ENCODE measurements at regions of chr3 and their contacts with region 1.

Region 1: GRCh38 chr3:46508850-46509591 is 11.2 kb downstream of the RTP3 start:
- DNase-seq: peak; percentile 48 to 94 (median 67)
- ATAC-seq: peak; percentile 83
- H3K4me3 ChIP-seq: no peak overlapping the region
- H3K27ac ChIP-seq: peak overlapping the region; percentile 80
- H3K4me1 ChIP-seq: peaks cover 30 to 71% of the 10 kb centered on the region in 2 experiments
- H3K27me3 ChIP-seq: no peaks in the 10 kb centered on the region
- CTCF ChIP-seq: no peak
- EP300 ChIP-seq: peak; percentile 100
- POLR2A ChIP-seq: no peak
- RAD21 ChIP-seq: 0 out of 4 replicates have a peak, but pooled peaks of 1 of the 2 experiments have one; percentile 9

Region 2: DNA sequence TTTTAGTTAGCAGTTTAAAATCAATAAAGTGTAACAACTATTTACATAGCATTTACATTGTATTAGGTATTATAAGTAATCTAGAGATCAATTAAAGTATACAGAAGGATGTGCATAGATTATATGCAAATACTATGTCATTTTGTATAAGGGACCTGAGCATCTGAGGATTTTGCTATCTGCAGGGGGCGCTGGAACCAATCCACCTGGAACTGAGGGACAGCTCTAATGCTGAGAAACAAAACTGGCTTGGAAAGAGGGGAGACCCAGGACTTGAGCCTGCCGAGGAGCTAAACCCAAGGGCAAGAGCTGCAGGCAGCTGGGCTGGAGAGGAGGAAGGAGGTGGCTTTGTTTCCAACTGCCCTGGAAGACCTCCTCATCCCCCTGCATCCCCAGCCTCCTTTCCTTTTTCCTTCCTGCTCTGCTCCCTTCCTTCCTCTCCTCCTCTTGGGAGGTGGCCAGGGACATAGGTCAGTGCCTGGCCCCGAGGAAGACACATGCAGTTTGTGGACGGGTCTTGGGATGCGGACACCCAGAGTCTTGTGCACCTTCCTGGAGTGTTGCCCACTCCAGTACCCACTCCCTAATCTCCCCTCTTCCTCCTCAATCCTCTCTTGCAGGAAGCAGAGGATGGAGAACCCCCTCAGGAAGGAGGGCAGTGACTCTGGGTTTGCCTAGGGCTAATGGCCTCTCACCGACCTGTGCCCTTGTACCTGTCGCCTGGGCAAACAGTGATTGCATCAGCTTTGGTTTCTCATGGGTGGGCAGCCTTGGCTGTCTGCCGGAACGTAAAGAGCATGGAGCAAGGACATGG is 12.1 kb before region 1 on chr3:
- CTCF ChIA-PET with region 1: no interaction called
- POLR2A ChIA-PET with region 1: interaction called, 23 read pairs
- in situ Hi-C with region 1: no loop called
- intact Hi-C with region 1: no loop called
- DNase-seq: peak in 2 of 4 experiments; percentile 62 to 76
- ATAC-seq: peak; percentile 78
- H3K4me3 ChIP-seq: no peak overlapping the region
- H3K27ac ChIP-seq: no peak overlapping the region
- H3K4me1 ChIP-seq: peaks cover 38 to 64% of the 10 kb centered on the region in 2 experiments; a peak in 4 of 5 replicates
- H3K27me3 ChIP-seq: no peaks in the 10 kb centered on the region
- CTCF ChIP-seq: peak; percentile 75 to 88 (median 85)
- EP300 ChIP-seq: no peak
- POLR2A ChIP-seq: no peak
- RAD21 ChIP-seq: peak; percentile 73 to 86

Region 3: GRCh38 chr3:46520531-46520930 is 11.5 kb after region 1 on chr3:
- CTCF ChIA-PET with region 1: no interaction called
- POLR2A ChIA-PET with region 1: interaction called, 10 read pairs
- in situ Hi-C with region 1: no loop called
- intact Hi-C with region 1: no loop called
- DNase-seq: no peak
- ATAC-seq: no peak
- H3K4me3 ChIP-seq: no peak overlapping the region
- H3K27ac ChIP-seq: no peak overlapping the region
- H3K4me1 ChIP-seq: peaks cover 8 to 16% of the 10 kb centered on the region in 2 experiments; a peak in 3 of 5 replicates
- H3K27me3 ChIP-seq: no peaks in the 10 kb centered on the region
- CTCF ChIP-seq: no peak
- EP300 ChIP-seq: no peak
- POLR2A ChIP-seq: no peak
- RAD21 ChIP-seq: no peak

Region 4: DNA sequence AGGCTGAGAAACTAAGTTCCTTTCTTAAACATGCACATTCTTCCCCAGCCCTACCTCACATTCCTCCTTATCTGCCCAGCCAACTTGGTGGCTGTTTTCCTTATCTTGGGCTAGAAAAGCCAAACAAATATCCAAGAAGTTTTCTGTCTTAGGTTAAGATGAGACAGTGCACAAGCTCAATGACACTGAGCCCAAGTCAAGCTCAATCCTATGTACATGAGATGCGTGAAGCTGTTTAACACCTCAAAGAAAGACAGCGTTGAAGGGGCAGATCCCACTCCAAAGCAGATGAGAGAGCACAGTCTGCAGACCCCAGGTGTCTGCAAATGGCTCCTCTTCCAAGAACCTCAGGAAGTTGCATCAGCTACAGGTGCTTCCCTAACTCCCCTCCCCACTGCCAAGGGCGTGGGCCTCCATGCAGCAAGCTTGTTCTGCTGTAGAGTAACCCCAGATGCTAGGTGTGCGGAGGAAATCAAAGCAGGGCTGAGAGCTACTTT is 40.4 kb after region 1 on chr3:
- CTCF ChIA-PET with region 1: no interaction called
- POLR2A ChIA-PET with region 1: interaction called, 4 read pairs
- in situ Hi-C with region 1: no loop called
- intact Hi-C with region 1: loop called (anchors 2 kb)
- DNase-seq: peak; percentile 57 to 89 (median 70)
- ATAC-seq: peak; percentile 89
- H3K4me3 ChIP-seq: no peak overlapping the region
- H3K27ac ChIP-seq: peak overlapping the region; percentile 79
- H3K4me1 ChIP-seq: peaks cover 38% of the 10 kb centered on the region in 2 experiments
- H3K27me3 ChIP-seq: no peaks in the 10 kb centered on the region; a peak in 1 of 5 replicates
- CTCF ChIP-seq: no peak
- EP300 ChIP-seq: peak; percentile 97
- POLR2A ChIP-seq: no peak
- RAD21 ChIP-seq: no peak